ENCODE measurements at regions of chr13 and their contacts with region 1.

Region 1: GRCh38 chr13:74871369-74872070 is 610.4 kb downstream of the TBC1D4 start:
- DNase-seq: peak; percentile 91
- ATAC-seq: peak; percentile 71
- H3K4me3 ChIP-seq: peak overlapping the region; percentile 33; the same call in 1 of the 2 replicates
- H3K27ac ChIP-seq: peak overlapping the region; percentile 99
- H3K4me1 ChIP-seq: peaks cover 43% of the 10 kb centered on the region
- H3K27me3 ChIP-seq: no peaks in the 10 kb centered on the region
- CTCF ChIP-seq: no peak

Region 2: DNA sequence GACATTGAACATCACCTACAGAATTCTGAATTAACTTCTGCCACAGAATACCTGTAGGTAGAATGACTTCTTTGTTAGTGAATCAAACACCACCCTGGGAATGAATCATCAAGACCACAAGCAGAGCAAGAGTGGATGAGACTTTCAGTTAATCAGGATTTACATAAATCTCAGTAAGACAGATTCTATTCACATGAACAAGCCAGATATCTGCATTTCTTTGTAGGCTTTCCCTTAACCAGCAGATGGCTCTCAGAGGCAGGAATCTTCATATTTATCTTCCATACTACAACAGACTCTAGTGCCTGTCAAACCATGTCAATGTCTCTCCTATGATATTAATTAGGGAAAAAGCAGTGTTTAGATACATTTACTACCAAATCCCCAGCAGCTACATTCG is 1149.4 kb before region 1 on chr13:
- CTCF ChIA-PET with region 1: no interaction called
- POLR2A ChIA-PET with region 1: no interaction called
- intact Hi-C with region 1: loop called (anchors 5 kb)
- DNase-seq: peak; percentile 82
- ATAC-seq: peak; percentile 94
- H3K4me3 ChIP-seq: no peak overlapping the region
- H3K27ac ChIP-seq: peak overlapping the region; percentile 56
- H3K4me1 ChIP-seq: peaks cover 21% of the 10 kb centered on the region
- H3K27me3 ChIP-seq: no peaks in the 10 kb centered on the region
- CTCF ChIP-seq: peak; percentile 61

Region 3: GRCh38 chr13:74287724-74288169 is 583.8 kb before region 1 on chr13:
- CTCF ChIA-PET with region 1: interaction called, 4 read pairs
- POLR2A ChIA-PET with region 1: no interaction called
- intact Hi-C with region 1: loop called (anchors 5 kb)
- DNase-seq: peak; percentile 40
- ATAC-seq: peak; percentile 23
- H3K4me3 ChIP-seq: no peak overlapping the region
- H3K27ac ChIP-seq: no peak overlapping the region
- H3K4me1 ChIP-seq: peaks cover 22% of the 10 kb centered on the region
- H3K27me3 ChIP-seq: no peaks in the 10 kb centered on the region
- CTCF ChIP-seq: no peak

Region 4: DNA sequence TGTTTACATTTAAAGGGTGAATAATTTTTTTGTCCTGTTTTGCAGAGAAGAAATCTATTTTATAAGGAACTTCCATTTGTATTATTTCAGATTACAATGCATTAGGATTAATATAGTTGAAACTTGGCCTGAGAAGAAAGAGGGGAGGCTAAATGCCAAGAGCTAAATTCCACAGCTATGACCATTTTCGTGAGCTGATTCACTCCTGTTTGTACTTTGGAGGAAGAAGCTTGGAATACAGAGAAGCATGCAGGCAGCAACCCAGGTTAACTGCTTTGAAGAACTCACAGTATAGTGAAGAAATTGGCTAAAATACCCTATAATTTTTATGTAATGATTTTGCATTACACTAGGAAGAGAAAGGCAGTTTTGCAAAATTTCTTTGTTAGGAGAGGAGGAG is 427.9 kb before region 1 on chr13:
- CTCF ChIA-PET with region 1: no interaction called
- POLR2A ChIA-PET with region 1: no interaction called
- intact Hi-C with region 1: loop called (anchors 1 kb)
- DNase-seq: peak; percentile 84
- ATAC-seq: peak; percentile 67
- H3K4me3 ChIP-seq: peak overlapping the region; percentile 49
- H3K27ac ChIP-seq: peak overlapping the region; percentile 99
- H3K4me1 ChIP-seq: peaks cover 40% of the 10 kb centered on the region
- H3K27me3 ChIP-seq: no peaks in the 10 kb centered on the region
- CTCF ChIP-seq: no peak

Region 5: GRCh38 chr13:74886502-74886901 is 15.0 kb after region 1 on chr13:
- CTCF ChIA-PET with region 1: no interaction called
- POLR2A ChIA-PET with region 1: no interaction called
- intact Hi-C with region 1: loop called (anchors 1 kb)
- DNase-seq: peak; percentile 80
- ATAC-seq: peak; percentile 90
- H3K4me3 ChIP-seq: peak overlapping the region; percentile 21; the same call in 1 of the 2 replicates
- H3K27ac ChIP-seq: peak overlapping the region; percentile 88
- H3K4me1 ChIP-seq: peaks cover 33% of the 10 kb centered on the region
- H3K27me3 ChIP-seq: no peaks in the 10 kb centered on the region
- CTCF ChIP-seq: no peak

Region 6: DNA sequence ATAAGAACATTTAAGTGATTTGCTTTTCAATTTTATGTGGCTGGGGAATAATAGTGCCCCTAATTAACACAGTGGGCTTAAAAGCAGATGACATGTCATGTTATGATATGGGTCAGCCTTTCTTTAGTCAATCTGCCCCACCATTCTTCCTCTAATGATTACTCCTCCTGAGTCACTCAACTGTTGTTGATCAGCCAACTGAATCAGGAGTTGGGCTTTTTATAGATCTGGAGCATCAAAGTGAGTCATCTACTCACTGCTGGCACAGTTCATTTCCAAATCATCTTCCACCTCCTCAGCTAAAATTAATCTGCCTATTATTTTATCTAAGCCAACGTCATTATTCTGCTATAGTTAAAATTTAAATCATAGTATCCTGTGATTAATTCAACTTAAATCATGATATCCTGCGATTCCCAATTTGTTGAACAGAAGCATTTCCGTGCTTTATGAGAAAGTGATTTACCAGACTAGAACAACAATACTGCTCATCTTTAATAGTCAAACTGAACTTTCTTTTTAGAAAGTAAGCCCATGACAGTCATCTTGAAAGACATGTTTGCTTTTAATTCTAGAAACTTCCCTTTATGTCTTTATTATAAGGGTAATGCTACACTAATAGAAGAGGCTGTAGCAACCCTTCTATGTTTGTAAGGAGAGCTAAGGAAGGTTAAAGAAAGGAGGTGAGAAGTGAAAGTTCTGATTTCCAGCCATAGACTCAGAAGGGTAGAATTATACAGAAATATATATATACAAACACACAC is 59.1 kb after region 1 on chr13:
- CTCF ChIA-PET with region 1: no interaction called
- POLR2A ChIA-PET with region 1: no interaction called
- intact Hi-C with region 1: loop called (anchors 1 kb)
- DNase-seq: peak; percentile 86
- ATAC-seq: peak; percentile 74
- H3K4me3 ChIP-seq: peak overlapping the region; percentile 14; the same call in 1 of the 2 replicates
- H3K27ac ChIP-seq: peak overlapping the region; percentile 86
- H3K4me1 ChIP-seq: peaks cover 33% of the 10 kb centered on the region
- H3K27me3 ChIP-seq: no peaks in the 10 kb centered on the region
- CTCF ChIP-seq: no peak

Region 7: GRCh38 chr13:75181906-75182305 is 310.4 kb after region 1 on chr13:
- CTCF ChIA-PET with region 1: no interaction called
- POLR2A ChIA-PET with region 1: no interaction called
- intact Hi-C with region 1: loop called (anchors 1 kb)
- DNase-seq: peak; percentile 80
- ATAC-seq: peak; percentile 26; the same call in 1 of the 2 replicates
- H3K4me3 ChIP-seq: no peak overlapping the region
- H3K27ac ChIP-seq: peak overlapping the region; percentile 69
- H3K4me1 ChIP-seq: peaks cover 31% of the 10 kb centered on the region
- H3K27me3 ChIP-seq: no peaks in the 10 kb centered on the region
- CTCF ChIP-seq: no peak

Measured in PC-3 (cell line).